ENCODE measurements at regions of chr20 and their contacts with region 1.

Region 1: GRCh38 chr20:62793912-62794724 is 2.2 kb upstream of the MRGBP start:
- DNase-seq: peak; percentile 99
- ATAC-seq: peak; percentile 68
- H3K4me3 Mint-ChIP-seq: peak overlapping the region; percentile 88
- H3K27ac Mint-ChIP-seq: peak overlapping the region; percentile 97
- H3K4me1 Mint-ChIP-seq: peaks cover 15% of the 10 kb centered on the region
- H3K27me3 Mint-ChIP-seq: no peaks in the 10 kb centered on the region

Region 2: GRCh38 chr20:62603021-62603906 is 190.9 kb before region 1 on chr20:
- POLR2A ChIA-PET with region 1: interaction called, 17 read pairs
- DNase-seq: peak; percentile 76
- ATAC-seq: peak; percentile 79
- H3K4me3 Mint-ChIP-seq: peak overlapping the region; percentile 86
- H3K27ac Mint-ChIP-seq: peak overlapping the region; percentile 95
- H3K4me1 Mint-ChIP-seq: peaks cover 15% of the 10 kb centered on the region
- H3K27me3 Mint-ChIP-seq: peaks cover 34% of the 10 kb centered on the region

Region 3: GRCh38 chr20:62623488-62624324 is 170.4 kb before region 1 on chr20:
- POLR2A ChIA-PET with region 1: interaction called, 13 read pairs
- DNase-seq: peak; percentile 92
- ATAC-seq: peak; percentile 83
- H3K4me3 Mint-ChIP-seq: peak overlapping the region; percentile 86
- H3K27ac Mint-ChIP-seq: peak overlapping the region; percentile 98
- H3K4me1 Mint-ChIP-seq: peaks cover 28% of the 10 kb centered on the region
- H3K27me3 Mint-ChIP-seq: no peaks in the 10 kb centered on the region

Region 4: GRCh38 chr20:62652051-62652926 is 141.8 kb before region 1 on chr20:
- POLR2A ChIA-PET with region 1: interaction called, 32 read pairs
- DNase-seq: peak; percentile 74
- ATAC-seq: peak; percentile 65
- H3K4me3 Mint-ChIP-seq: peak overlapping the region; percentile 84
- H3K27ac Mint-ChIP-seq: peak overlapping the region; percentile 98
- H3K4me1 Mint-ChIP-seq: peaks cover 42% of the 10 kb centered on the region
- H3K27me3 Mint-ChIP-seq: no peaks in the 10 kb centered on the region

Region 5: GRCh38 chr20:62808211-62808865 is 14.2 kb after region 1 on chr20:
- POLR2A ChIA-PET with region 1: interaction called, 59 read pairs
- DNase-seq: peak; percentile 83
- ATAC-seq: peak; percentile 43
- H3K4me3 Mint-ChIP-seq: peak overlapping the region; percentile 30
- H3K27ac Mint-ChIP-seq: peak overlapping the region; percentile 69
- H3K4me1 Mint-ChIP-seq: peaks cover 23% of the 10 kb centered on the region
- H3K27me3 Mint-ChIP-seq: no peaks in the 10 kb centered on the region